B cell (primary cell): ENCODE measurements at regions of chr2 and their contacts with region 1.

Region 1: GRCh38 chr2:11743846-11744553 is 2.4 kb upstream of the LPIN1 start:
- DNase-seq: peak; percentile 72
- ATAC-seq: peak; percentile 43
- H3K4me3 ChIP-seq: peak overlapping the region in 2 of 5 experiments; percentile 3 to 17
- H3K4me3 Mint-ChIP-seq: peak overlapping the region; percentile 63
- H3K27ac ChIP-seq: no peak overlapping the region
- H3K27ac Mint-ChIP-seq: peak overlapping the region; percentile 85
- H3K4me1 ChIP-seq: peaks cover 37 to 52% of the 10 kb centered on the region in 2 donors
- H3K4me1 Mint-ChIP-seq: peaks cover 49% of the 10 kb centered on the region
- H3K27me3 ChIP-seq: no peaks in the 10 kb centered on the region
- H3K27me3 Mint-ChIP-seq: no peaks in the 10 kb centered on the region
- CTCF ChIP-seq: no peak

Region 2: DNA sequence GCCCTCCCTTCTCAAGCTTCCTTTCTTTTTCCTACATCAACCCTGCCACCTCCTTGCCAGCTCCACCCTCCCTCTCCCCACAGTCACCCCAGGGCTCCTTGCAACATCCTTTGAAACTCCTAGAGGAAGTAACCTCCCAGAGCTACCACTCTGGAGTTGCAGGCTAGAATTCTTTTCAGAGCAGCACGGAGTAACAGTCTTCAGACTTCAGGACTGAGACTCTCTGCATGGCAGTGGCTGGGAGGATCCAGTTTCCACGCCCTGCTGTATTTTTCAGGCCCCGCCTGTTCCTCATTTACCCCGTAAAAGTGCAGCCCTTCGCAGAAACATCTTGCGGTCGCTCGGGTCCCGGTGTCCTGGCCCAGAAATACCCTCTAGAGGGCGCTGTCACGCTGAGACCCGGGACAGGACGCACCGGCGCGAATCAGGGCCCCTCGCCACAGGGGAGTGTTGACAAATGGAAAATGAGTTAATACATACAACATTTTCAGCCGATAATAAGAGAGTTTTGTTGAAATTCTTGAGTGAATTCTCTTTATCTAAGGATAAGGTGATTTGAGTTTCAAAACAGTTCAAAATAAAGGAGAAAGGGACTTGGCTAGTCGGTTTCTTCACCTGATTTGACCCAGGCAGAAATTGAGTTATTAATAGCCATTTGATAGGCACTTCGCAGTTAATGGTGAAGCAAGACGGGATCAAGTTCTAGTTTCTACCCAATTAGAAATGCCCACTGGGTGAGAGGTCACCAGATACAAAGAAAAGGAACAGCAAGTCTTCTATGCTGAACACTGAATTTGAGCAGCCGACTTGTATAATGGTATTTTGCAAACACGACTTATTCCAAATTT is 55.6 kb before region 1 on chr2:
- CTCF ChIA-PET with region 1: interaction called, 25 read pairs
- POLR2A ChIA-PET with region 1: no interaction called
- intact Hi-C with region 1: loop called (anchors 1 kb)
- DNase-seq: peak; percentile 89
- ATAC-seq: peak; percentile 83
- H3K4me3 ChIP-seq: peak overlapping the region in 1 of 5 experiments; percentile 17
- H3K4me3 Mint-ChIP-seq: peak overlapping the region; percentile 67
- H3K27ac ChIP-seq: no peak overlapping the region
- H3K27ac Mint-ChIP-seq: no peak overlapping the region
- H3K4me1 ChIP-seq: peaks cover 11 to 16% of the 10 kb centered on the region in 2 donors
- H3K4me1 Mint-ChIP-seq: peaks cover 8% of the 10 kb centered on the region
- H3K27me3 ChIP-seq: peaks cover 0 to 4% (median 0%) of the 10 kb centered on the region in 4 experiments
- H3K27me3 Mint-ChIP-seq: peaks cover 25% of the 10 kb centered on the region
- CTCF ChIP-seq: peak; percentile 85